ENCODE measurements at regions of chr18 and their contacts with region 1.

Region 1: DNA sequence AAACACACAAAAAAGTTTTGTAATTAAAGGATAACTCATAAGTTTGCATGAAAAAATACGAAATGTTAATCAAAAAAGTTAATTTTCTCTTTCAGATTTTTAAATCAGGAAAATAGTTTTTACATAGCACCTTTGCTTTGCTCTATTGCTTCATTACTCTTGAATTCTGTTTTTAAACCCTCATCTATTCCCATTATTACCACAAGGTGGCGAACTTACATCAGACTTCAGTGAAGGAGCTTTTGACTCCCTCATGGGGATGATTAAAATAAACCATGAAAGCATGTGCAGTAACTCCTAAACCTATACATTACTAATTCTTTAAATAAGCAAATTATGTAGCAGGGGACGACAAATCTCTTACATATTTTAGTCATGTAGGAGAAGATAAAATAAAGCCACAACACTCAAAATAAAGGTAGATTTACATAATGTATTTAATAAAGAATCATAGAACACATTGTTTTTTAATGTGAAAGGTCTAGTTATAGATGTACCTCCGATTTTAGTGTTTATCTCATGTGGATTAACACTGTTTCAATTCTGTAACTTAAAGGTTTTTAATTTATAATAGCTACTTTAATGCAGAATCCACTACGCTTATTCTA is 105.2 kb downstream of the NETO1 start:
- DNase-seq: no peak
- H3K4me3 Mint-ChIP-seq: no peak overlapping the region
- H3K27ac Mint-ChIP-seq: no peak overlapping the region
- H3K4me1 Mint-ChIP-seq: no peaks in the 10 kb centered on the region
- H3K27me3 Mint-ChIP-seq: no peaks in the 10 kb centered on the region

Region 2: GRCh38 chr18:72867721-72868584 is 105.3 kb after region 1 on chr18 and contains the start of gene NETO1:
- intact Hi-C with region 1: no loop called
- DNase-seq: no peak
- H3K4me3 Mint-ChIP-seq: no peak within 1 kb of the TSS
- H3K27ac Mint-ChIP-seq: no peak within 1 kb of the TSS
- H3K4me1 Mint-ChIP-seq: no peaks in the 10 kb centered on the region
- H3K27me3 Mint-ChIP-seq: peaks cover 20% of the 10 kb centered on the region
- total RNA-seq, gene NETO1: not detected in 2 replicates

Region 3: GRCh38 chr18:73136134-73136533 is 373.5 kb after region 1 on chr18:
- intact Hi-C with region 1: loop called (anchors 5 kb)
- DNase-seq: no peak
- H3K4me3 Mint-ChIP-seq: no peak overlapping the region
- H3K27ac Mint-ChIP-seq: no peak overlapping the region
- H3K4me1 Mint-ChIP-seq: no peaks in the 10 kb centered on the region
- H3K27me3 Mint-ChIP-seq: no peaks in the 10 kb centered on the region

Region 4: DNA sequence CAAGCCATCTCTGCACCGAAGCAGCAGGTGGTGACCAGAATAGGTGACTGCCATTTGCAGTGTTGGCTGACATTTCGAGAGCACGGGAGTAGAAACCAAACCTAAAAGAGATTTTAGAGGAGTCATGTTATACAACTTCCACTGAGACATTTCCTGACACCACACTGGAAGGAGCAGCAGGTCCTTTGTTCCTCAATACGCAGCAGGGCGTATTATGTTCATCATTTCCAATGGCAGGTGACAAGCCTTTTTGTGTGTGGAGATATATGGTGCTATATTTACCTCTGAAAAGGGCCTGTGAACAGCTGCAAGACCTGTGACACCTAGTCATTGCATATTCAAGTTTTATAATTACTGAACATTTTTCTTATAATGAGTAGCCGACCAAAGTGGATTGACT is 524.0 kb after region 1 on chr18:
- intact Hi-C with region 1: no loop called
- DNase-seq: no peak
- H3K4me3 Mint-ChIP-seq: no peak overlapping the region
- H3K27ac Mint-ChIP-seq: no peak overlapping the region
- H3K4me1 Mint-ChIP-seq: no peaks in the 10 kb centered on the region
- H3K27me3 Mint-ChIP-seq: no peaks in the 10 kb centered on the region

Region 5: DNA sequence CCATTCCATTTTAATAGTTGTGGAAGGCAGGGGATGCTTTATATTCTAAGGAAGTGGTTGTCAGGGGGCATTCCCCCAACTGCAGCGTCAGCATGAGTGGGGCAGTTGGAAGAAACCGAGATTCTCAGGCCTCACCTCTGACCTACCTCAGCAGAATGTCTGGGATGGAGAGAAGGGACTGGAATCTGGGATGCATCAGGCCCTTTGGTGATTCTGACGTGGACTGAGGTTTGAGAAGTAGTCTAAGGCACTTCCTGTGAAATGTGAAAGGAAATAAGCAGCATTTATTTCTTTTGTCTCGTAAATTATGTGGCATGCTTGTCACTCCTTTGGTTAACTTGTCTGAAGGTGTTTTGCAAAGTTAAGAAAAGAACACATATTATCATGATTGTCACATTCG is 645.9 kb after region 1 on chr18:
- intact Hi-C with region 1: no loop called
- DNase-seq: no peak
- H3K4me3 Mint-ChIP-seq: no peak overlapping the region
- H3K27ac Mint-ChIP-seq: no peak overlapping the region
- H3K4me1 Mint-ChIP-seq: no peaks in the 10 kb centered on the region
- H3K27me3 Mint-ChIP-seq: no peaks in the 10 kb centered on the region

Region 6: DNA sequence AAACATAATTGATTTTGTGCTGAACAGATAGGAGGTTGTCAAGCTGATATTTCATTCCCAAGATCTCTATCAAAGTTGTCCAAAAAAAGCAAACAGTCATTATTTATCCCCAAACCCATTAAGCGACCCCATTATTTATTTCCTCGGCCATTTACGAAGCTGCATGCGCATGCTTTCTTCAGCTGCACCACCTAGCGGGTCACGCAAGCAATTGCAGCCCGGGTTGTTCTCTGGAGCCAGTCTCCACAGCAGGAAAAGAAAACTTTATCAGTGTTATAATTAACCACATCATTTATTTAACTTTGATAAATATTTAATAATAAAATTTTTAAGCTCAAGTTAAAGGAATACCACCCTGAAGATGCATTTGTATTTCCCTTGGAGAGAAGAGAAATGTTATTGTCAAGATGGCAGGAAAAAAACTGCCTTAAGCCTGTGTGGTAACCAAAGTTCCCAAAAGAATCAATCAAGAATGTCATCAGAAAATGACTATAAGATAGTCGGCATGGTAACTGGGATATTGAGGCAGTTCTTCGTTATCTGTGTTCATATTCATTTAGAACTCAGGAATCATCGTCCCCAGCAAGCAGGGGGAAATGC is 1080.3 kb after region 1 on chr18:
- intact Hi-C with region 1: loop called (anchors 1 kb)
- DNase-seq: no peak
- H3K4me3 Mint-ChIP-seq: no peak overlapping the region
- H3K27ac Mint-ChIP-seq: no peak overlapping the region
- H3K4me1 Mint-ChIP-seq: no peaks in the 10 kb centered on the region
- H3K27me3 Mint-ChIP-seq: peaks cover 2% of the 10 kb centered on the region

Measured in activated T-helper 1 cell treated with anti-CD3 and anti-CD28 coated beads, Interleukin-12 subunit alpha, Interleukin-12 subunit beta, Interleukin-2, Interleukin-4 antibody, amounts not matched to agents 30 ng/mL and 10 ng/mL and 1 ng/mL, durations not matched to agents 14 hours and 24 hours and 36 hours (primary cell).